CD8-positive, alpha-beta memory T cell (primary cell): ENCODE measurements at regions of chr20 and their contacts with region 1.

Region 1: GRCh38 chr20:53611449-53611894 is 17.8 kb upstream of the ZNF217 start:
- DNase-seq: no peak
- H3K4me3 ChIP-seq: no peak overlapping the region
- H3K4me3 Mint-ChIP-seq: peak overlapping the region in 1 of 7 donors; percentile 41
- H3K27ac ChIP-seq: peak overlapping the region; percentile 41
- H3K27ac Mint-ChIP-seq: no peak overlapping the region
- H3K4me1 ChIP-seq: peaks cover 25% of the 10 kb centered on the region
- H3K4me1 Mint-ChIP-seq: peaks cover 23 to 32% (median 24%) of the 10 kb centered on the region in 3 donors
- H3K27me3 ChIP-seq: no peaks in the 10 kb centered on the region
- H3K27me3 Mint-ChIP-seq: no peaks in the 10 kb centered on the region

Region 2: GRCh38 chr20:53594068-53595017 is 17.1 kb before region 1 on chr20:
- CTCF ChIA-PET with region 1: interaction called, 16 read pairs
- POLR2A ChIA-PET with region 1: interaction called, 21 read pairs
- DNase-seq: peak; percentile 95 to 99 (median 96)
- H3K4me3 ChIP-seq: peak overlapping the region; percentile 63
- H3K4me3 Mint-ChIP-seq: peak overlapping the region; percentile 83 to 99 (median 98)
- H3K27ac ChIP-seq: peak overlapping the region; percentile 80
- H3K27ac Mint-ChIP-seq: peak overlapping the region; percentile 90 to 96 (median 93)
- H3K4me1 ChIP-seq: peaks cover 34% of the 10 kb centered on the region
- H3K4me1 Mint-ChIP-seq: peaks cover 49 to 71% (median 66%) of the 10 kb centered on the region in 3 donors
- H3K27me3 ChIP-seq: no peaks in the 10 kb centered on the region
- H3K27me3 Mint-ChIP-seq: peaks cover 0 to 4% of the 10 kb centered on the region in 2 donors

Region 3: GRCh38 chr20:53623454-53624211 is 12.2 kb after region 1 on chr20:
- CTCF ChIA-PET with region 1: interaction called, 7 read pairs
- POLR2A ChIA-PET with region 1: interaction called, 30 read pairs
- DNase-seq: no peak
- H3K4me3 ChIP-seq: peak overlapping the region; percentile 49
- H3K4me3 Mint-ChIP-seq: peak overlapping the region; percentile 74 to 85 (median 83)
- H3K27ac ChIP-seq: peak overlapping the region; percentile 71
- H3K27ac Mint-ChIP-seq: peak overlapping the region; percentile 72 to 92 (median 84)
- H3K4me1 ChIP-seq: peaks cover 32% of the 10 kb centered on the region
- H3K4me1 Mint-ChIP-seq: peaks cover 32 to 41% (median 32%) of the 10 kb centered on the region in 3 donors
- H3K27me3 ChIP-seq: no peaks in the 10 kb centered on the region
- H3K27me3 Mint-ChIP-seq: no peaks in the 10 kb centered on the region

Region 4: DNA sequence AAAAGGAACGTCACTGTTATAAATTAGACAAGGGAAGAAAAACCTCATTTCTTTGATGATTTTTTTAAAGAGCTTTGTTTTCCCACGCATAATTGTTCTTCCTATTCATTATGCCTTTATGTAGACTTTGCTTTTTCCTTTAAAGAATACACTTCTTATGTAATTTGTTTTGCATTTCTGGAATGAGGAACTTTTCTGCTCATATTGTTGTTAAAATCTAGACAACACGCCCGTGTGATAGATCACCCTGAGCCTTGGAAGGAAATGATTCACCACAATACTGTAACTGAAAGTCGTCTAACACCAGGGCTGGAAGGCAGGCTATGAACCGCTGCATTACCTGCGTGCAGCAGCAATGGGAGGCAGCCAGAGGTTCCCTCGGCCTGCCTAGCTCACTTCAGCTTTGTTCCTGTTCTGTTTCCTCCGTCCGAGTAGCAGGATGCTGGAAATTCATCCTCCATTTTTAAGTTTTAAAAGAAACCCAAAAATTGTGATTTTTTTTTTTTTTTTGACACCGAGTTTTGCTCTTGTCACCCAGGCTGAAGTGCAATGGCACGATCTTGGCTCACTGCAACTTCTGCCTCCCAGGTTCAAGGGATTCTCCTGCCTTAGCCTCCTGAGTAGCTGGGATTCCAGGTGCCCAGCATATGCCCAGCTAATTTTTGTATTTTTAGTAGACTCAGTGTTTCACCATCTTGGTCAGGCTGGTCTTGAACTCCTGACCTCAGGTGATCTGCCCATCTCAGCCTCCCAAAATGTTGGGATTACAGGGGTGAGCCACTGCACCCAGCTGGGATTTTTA is 31.8 kb after region 1 on chr20:
- CTCF ChIA-PET with region 1: interaction called, 9 read pairs
- POLR2A ChIA-PET with region 1: interaction called, 19 read pairs
- DNase-seq: peak; percentile 33 to 78 (median 68)
- H3K4me3 ChIP-seq: peak overlapping the region; percentile 14
- H3K4me3 Mint-ChIP-seq: peak overlapping the region; percentile 78 to 94 (median 85)
- H3K27ac ChIP-seq: peak overlapping the region; percentile 73
- H3K27ac Mint-ChIP-seq: peak overlapping the region; percentile 93 to 99 (median 97)
- H3K4me1 ChIP-seq: peaks cover 34% of the 10 kb centered on the region
- H3K4me1 Mint-ChIP-seq: peaks cover 29 to 46% (median 42%) of the 10 kb centered on the region in 3 donors
- H3K27me3 ChIP-seq: no peaks in the 10 kb centered on the region
- H3K27me3 Mint-ChIP-seq: no peaks in the 10 kb centered on the region

Region 5: GRCh38 chr20:53660078-53660909 is 48.8 kb after region 1 on chr20:
- CTCF ChIA-PET with region 1: interaction called, 6 read pairs
- POLR2A ChIA-PET with region 1: interaction called, 13 read pairs
- DNase-seq: peak in 2 of 5 donors; percentile 2 to 45
- H3K4me3 ChIP-seq: peak overlapping the region; percentile 54
- H3K4me3 Mint-ChIP-seq: peak overlapping the region; percentile 86 to 93 (median 88)
- H3K27ac ChIP-seq: no peak overlapping the region
- H3K27ac Mint-ChIP-seq: peak overlapping the region; percentile 19 to 92 (median 89)
- H3K4me1 ChIP-seq: peaks cover 46% of the 10 kb centered on the region
- H3K4me1 Mint-ChIP-seq: peaks cover 43 to 64% (median 61%) of the 10 kb centered on the region in 3 donors
- H3K27me3 ChIP-seq: no peaks in the 10 kb centered on the region
- H3K27me3 Mint-ChIP-seq: peaks cover 0 to 2% of the 10 kb centered on the region in 2 donors

Region 6: GRCh38 chr20:53839423-53840176 is 228.1 kb after region 1 on chr20:
- CTCF ChIA-PET with region 1: no interaction called
- POLR2A ChIA-PET with region 1: interaction called, 12 read pairs
- DNase-seq: peak; percentile 39 to 86 (median 75)
- H3K4me3 ChIP-seq: no peak overlapping the region
- H3K4me3 Mint-ChIP-seq: peak overlapping the region; percentile 28 to 89 (median 75)
- H3K27ac ChIP-seq: no peak overlapping the region
- H3K27ac Mint-ChIP-seq: peak overlapping the region; percentile 87 to 100 (median 97)
- H3K4me1 ChIP-seq: peaks cover 87% of the 10 kb centered on the region
- H3K4me1 Mint-ChIP-seq: peaks cover 68 to 86% (median 85%) of the 10 kb centered on the region in 3 donors
- H3K27me3 ChIP-seq: no peaks in the 10 kb centered on the region
- H3K27me3 Mint-ChIP-seq: no peaks in the 10 kb centered on the region